ENCODE measurements at regions of chr1 and their contacts with region 1.

Region 1: GRCh38 chr1:68120136-68120791 is 69.8 kb upstream of the DIRAS3 start:
- DNase-seq: peak in 1 of 2 donors; percentile 27
- ATAC-seq: peak; percentile 57 to 84
- H3K4me3 ChIP-seq: no peak overlapping the region
- H3K27ac ChIP-seq: no peak overlapping the region
- H3K4me1 ChIP-seq: no peaks in the 10 kb centered on the region
- H3K27me3 ChIP-seq: no peaks in the 10 kb centered on the region
- CTCF ChIP-seq: peak; percentile 72 to 85 (median 79)
- POLR2A ChIP-seq: no peak

Region 2: GRCh38 chr1:67535474-67535873 is 584.8 kb before region 1 on chr1:
- in situ Hi-C with region 1: loop called in 2 of 4 experiments (anchors 25 kb)
- intact Hi-C with region 1: loop called (anchors 10 kb)
- DNase-seq: peak; percentile 59 to 74
- ATAC-seq: peak; percentile 82 to 92
- H3K4me3 ChIP-seq: no peak overlapping the region
- H3K27ac ChIP-seq: no peak overlapping the region
- H3K4me1 ChIP-seq: peaks cover 6% of the 10 kb centered on the region in 2 donors
- H3K27me3 ChIP-seq: no peaks in the 10 kb centered on the region
- CTCF ChIP-seq: peak; percentile 91 to 97 (median 92)
- POLR2A ChIP-seq: no peak

Region 3: GRCh38 chr1:67766141-67766978 is 353.9 kb before region 1 on chr1:
- in situ Hi-C with region 1: loop called in 2 of 4 experiments (anchors 10 kb)
- intact Hi-C with region 1: no loop called
- DNase-seq: peak in 1 of 2 donors; percentile 16
- ATAC-seq: peak; percentile 53 to 68
- H3K4me3 ChIP-seq: peak overlapping the region in 3 of 4 donors; percentile 21 to 48 (median 39)
- H3K27ac ChIP-seq: no peak overlapping the region
- H3K4me1 ChIP-seq: peaks cover 0 to 6% of the 10 kb centered on the region in 2 donors
- H3K27me3 ChIP-seq: no peaks in the 10 kb centered on the region
- CTCF ChIP-seq: peak; percentile 64 to 85 (median 75)
- POLR2A ChIP-seq: no peak

Region 4: DNA sequence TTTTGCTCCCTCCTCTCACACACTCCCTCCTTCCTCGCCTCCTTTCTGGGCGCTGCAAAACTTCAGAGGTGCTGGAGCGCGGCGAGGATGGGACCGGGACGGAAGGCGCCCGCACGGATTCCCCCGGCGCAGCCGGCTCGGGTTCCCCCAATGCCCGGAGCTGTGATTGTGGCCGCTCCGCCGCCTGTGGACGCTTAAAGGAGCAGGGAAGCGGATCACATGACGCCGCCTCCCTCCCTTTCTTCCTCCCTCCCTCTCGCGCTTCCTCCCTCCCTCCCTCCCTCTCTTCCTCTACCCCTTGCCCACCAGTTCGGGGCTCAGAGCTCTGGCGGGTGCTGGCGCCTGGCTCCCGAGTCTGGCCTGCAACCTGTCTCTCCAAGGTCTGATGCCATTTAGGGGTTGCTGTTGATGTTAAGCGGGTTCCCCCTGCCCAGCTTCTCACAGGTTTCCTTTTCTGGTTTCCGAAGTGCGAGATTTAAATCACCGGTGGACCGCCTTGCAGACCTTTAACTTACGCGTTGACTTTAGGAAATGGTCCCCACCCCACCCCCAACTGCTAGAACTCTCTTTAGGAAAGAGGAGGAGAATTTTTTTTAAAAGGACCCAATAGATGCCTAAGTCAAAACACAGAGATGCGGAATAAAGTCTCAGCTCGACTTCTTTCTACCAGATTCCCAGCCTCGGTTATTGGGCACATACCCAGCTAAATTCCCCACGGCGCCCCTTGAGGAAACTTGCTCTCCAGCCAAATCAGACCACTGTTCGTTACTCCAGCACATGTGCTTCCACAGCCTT is 112.3 kb after region 1 on chr1 and contains the start of gene WLS:
- in situ Hi-C with region 1: loop called in 1 of 4 experiments (anchors 10 kb)
- intact Hi-C with region 1: loop called (anchors 2 kb)
- DNase-seq: peak; percentile 70 to 71
- ATAC-seq: peak; percentile 77 to 84
- H3K4me3 ChIP-seq: peak within 1 kb of the TSS; percentile 68 to 79 (median 75)
- H3K27ac ChIP-seq: peak within 1 kb of the TSS; percentile 78 to 83 (median 80)
- H3K4me1 ChIP-seq: peaks cover 0 to 22% of the 10 kb centered on the region in 2 donors
- H3K27me3 ChIP-seq: no peaks in the 10 kb centered on the region
- CTCF ChIP-seq: peak in 2 of 5 experiments; percentile 31 to 37
- POLR2A ChIP-seq: peak; percentile 79 to 88
- total RNA-seq, gene WLS: 8.6 to 15.7 (median 11.6) TPM

Region 5: DNA sequence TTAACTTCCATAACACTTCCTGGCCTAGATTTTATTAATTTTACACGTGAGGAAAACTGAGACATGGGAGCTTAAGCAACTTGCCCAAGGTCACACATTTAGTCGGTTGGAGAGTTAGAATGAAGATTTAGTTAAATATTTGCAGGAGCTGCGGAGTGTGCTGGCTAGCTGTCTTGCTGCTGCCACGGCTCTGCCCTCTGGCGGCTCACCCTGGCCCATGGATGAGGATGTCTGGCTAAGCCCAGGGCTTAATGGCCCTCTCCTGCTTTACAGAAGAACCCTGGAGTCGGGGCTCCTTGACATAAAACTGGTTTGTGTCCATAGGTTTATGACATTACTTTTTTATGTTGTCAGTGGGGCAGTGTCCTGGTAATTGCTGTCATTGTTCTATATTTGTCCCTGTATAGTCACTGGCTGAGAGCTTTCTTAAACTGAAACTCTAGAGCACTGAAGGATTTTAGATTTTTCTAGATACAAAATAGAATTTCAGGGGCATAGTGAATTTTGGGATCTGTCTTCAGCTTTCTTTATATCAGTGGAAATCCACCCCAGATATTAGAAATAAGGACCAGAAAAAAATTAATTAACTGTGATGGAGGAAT is 200.9 kb after region 1 on chr1:
- in situ Hi-C with region 1: no loop called
- intact Hi-C with region 1: loop called (anchors 1 kb)
- DNase-seq: peak; percentile 5 to 31
- ATAC-seq: peak; percentile 60
- H3K4me3 ChIP-seq: no peak overlapping the region
- H3K27ac ChIP-seq: no peak overlapping the region
- H3K4me1 ChIP-seq: no peaks in the 10 kb centered on the region
- H3K27me3 ChIP-seq: no peaks in the 10 kb centered on the region
- CTCF ChIP-seq: peak; percentile 43 to 71 (median 59)
- POLR2A ChIP-seq: no peak

Region 6: GRCh38 chr1:68346188-68346808 is 226.0 kb after region 1 on chr1:
- in situ Hi-C with region 1: loop called (anchors 5 kb)
- intact Hi-C with region 1: loop called (anchors 1 kb)
- DNase-seq: no peak
- ATAC-seq: no peak
- H3K4me3 ChIP-seq: no peak overlapping the region
- H3K27ac ChIP-seq: no peak overlapping the region
- H3K4me1 ChIP-seq: no peaks in the 10 kb centered on the region
- H3K27me3 ChIP-seq: no peaks in the 10 kb centered on the region
- CTCF ChIP-seq: peak; percentile 11 to 62 (median 33)
- POLR2A ChIP-seq: no peak

Measured in gastrocnemius medialis (tissue), 4 donors.